Activated CD4-positive, alpha-beta T cell treated with anti-CD3 and anti-CD28 coated beads, Interleukin-2, amount 10 ng/mL, durations not matched to agents 24 days and 14 days (primary cell): ENCODE measurements at regions of chr11 and their contacts with region 1.

Region 1: GRCh38 chr11:1309498-1310317 is at the start of gene TOLLIP:
- DNase-seq: peak; percentile 99
- H3K4me3 Mint-ChIP-seq: peak within 1 kb of the TSS; percentile 87
- H3K27ac Mint-ChIP-seq: peak within 1 kb of the TSS; percentile 94
- H3K4me1 Mint-ChIP-seq: peaks cover 27% of the 10 kb centered on the region
- H3K27me3 Mint-ChIP-seq: peaks cover 21% of the 10 kb centered on the region
- total RNA-seq, gene TOLLIP: 32.4 and 38.9 TPM in 2 replicates

Region 2: DNA sequence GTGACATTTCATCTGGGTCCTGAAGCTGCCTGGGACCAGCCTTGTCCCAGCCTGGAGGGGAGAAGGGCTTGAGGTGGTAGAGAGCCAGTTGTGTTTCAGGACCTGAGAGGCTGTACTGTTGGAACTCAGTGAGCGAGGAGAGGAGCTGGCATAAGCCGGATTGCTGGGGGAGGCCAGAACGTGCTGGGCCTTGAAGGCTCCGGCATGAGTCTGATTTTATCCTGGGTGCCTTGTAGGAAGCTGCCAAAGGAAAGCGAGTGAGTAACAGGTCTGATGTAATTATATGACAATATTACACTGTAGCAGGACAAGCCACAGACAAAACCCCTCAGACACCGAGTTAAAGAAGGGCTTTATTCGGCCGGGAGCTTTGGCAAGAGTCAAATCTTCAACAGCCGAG is 366.9 kb before region 1 on chr11:
- intact Hi-C with region 1: no loop called
- DNase-seq: no peak
- H3K4me3 Mint-ChIP-seq: no peak overlapping the region
- H3K27ac Mint-ChIP-seq: no peak overlapping the region
- H3K4me1 Mint-ChIP-seq: peaks cover 10% of the 10 kb centered on the region
- H3K27me3 Mint-ChIP-seq: no peaks in the 10 kb centered on the region

Region 3: DNA sequence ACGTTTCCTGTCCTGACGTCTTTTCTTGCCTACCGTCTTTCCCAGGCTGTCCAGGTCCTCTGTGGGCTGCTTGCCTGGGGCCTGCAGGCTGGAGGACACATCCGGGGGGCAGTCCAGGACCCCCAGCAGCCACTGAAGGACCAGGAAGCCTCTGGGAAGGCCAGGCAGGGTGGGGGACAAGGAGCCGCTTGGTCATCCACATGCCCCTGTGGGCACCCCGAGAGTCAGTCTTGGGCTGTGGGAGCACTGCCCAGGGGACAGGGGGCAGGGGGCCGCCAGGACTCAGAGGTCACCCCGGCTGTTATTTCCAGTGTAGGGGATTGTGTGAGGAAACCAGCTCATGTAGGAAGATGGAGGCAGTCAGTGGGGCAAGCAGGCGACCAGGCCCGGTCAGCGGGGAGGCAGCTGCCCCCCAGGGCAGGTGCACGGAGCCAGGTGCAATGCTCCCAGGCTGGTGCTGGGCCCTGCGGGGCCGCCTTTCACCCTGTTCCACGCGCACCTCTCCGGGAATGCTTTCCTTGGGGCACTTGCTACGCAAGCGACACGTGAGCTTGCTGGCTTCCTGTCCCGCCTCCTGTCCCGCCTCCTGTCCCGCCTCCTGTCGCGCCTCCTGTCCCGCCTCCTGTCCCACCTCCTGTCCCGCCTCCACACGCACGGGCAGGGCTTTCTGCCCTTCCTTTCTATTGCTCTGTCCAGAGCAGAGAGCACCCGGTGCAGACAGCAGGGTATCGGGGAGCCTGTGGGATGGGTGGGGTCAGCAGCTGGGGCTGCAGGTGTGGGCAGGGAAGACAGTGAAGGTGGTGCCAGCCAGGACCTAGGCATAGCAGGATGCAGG is 47.3 kb before region 1 on chr11:
- intact Hi-C with region 1: loop called (anchors 2 kb)
- DNase-seq: peak; percentile 94
- H3K4me3 Mint-ChIP-seq: peak overlapping the region; percentile 78
- H3K27ac Mint-ChIP-seq: peak overlapping the region; percentile 86
- H3K4me1 Mint-ChIP-seq: peaks cover 6% of the 10 kb centered on the region
- H3K27me3 Mint-ChIP-seq: no peaks in the 10 kb centered on the region

Region 4: GRCh38 chr11:1335811-1336761 is 26.4 kb after region 1 on chr11:
- intact Hi-C with region 1: loop called (anchors 1 kb)
- DNase-seq: peak; percentile 86
- H3K4me3 Mint-ChIP-seq: peak overlapping the region; percentile 80
- H3K27ac Mint-ChIP-seq: peak overlapping the region; percentile 80
- H3K4me1 Mint-ChIP-seq: peaks cover 13% of the 10 kb centered on the region
- H3K27me3 Mint-ChIP-seq: peaks cover 18% of the 10 kb centered on the region

Region 5: GRCh38 chr11:1382831-1383607 is 73.3 kb after region 1 on chr11:
- intact Hi-C with region 1: loop called (anchors 2 kb)
- DNase-seq: peak; percentile 88
- H3K4me3 Mint-ChIP-seq: peak overlapping the region; percentile 83
- H3K27ac Mint-ChIP-seq: peak overlapping the region; percentile 86
- H3K4me1 Mint-ChIP-seq: peaks cover 12% of the 10 kb centered on the region
- H3K27me3 Mint-ChIP-seq: peaks cover 31% of the 10 kb centered on the region